ENCODE measurements at regions of chr7 and their contacts with region 1.

Region 1: GRCh38 chr7:96321658-96322372 is at the start of gene SLC25A13:
- DNase-seq: peak; percentile 92 to 93
- ATAC-seq: peak; percentile 98 to 100 (median 98)
- H3K4me3 ChIP-seq: peak within 1 kb of the TSS; percentile 67 to 99 (median 93)
- H3K27ac ChIP-seq: peak within 1 kb of the TSS; percentile 93 to 99 (median 97)
- H3K4me1 ChIP-seq: peaks cover 5 to 41% (median 32%) of the 10 kb centered on the region in 9 donors
- H3K27me3 ChIP-seq: no peaks in the 10 kb centered on the region
- CTCF ChIP-seq: no peak
- total RNA-seq, gene SLC25A13: 6.5 to 15.3 (median 10.3) TPM

Region 2: DNA sequence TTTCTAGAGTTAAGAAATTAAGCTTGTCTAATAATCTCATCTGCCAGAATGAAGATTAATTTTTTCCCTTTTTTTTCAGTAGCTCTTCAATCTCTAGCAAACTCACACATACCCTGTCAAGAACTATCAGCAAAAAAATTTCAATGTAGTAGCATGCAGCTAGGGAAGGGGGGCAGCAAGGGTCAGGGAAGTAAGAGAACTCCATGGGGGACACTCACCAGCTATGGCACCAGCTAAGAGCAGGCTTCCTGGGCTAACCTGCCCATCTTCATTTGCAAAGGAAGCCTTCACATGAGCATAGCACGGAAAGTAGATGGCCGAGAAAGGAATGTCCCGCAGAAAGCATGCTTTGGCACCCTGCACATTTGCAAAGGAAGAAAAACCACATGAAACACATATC is 190.3 kb before region 1 on chr7:
- intact Hi-C with region 1: no loop called
- DNase-seq: no peak
- ATAC-seq: no peak
- H3K4me3 ChIP-seq: no peak overlapping the region
- H3K27ac ChIP-seq: no peak overlapping the region
- H3K4me1 ChIP-seq: no peaks in the 10 kb centered on the region
- H3K27me3 ChIP-seq: no peaks in the 10 kb centered on the region
- CTCF ChIP-seq: peak in 1 of 9 donors; percentile 11

Region 3: DNA sequence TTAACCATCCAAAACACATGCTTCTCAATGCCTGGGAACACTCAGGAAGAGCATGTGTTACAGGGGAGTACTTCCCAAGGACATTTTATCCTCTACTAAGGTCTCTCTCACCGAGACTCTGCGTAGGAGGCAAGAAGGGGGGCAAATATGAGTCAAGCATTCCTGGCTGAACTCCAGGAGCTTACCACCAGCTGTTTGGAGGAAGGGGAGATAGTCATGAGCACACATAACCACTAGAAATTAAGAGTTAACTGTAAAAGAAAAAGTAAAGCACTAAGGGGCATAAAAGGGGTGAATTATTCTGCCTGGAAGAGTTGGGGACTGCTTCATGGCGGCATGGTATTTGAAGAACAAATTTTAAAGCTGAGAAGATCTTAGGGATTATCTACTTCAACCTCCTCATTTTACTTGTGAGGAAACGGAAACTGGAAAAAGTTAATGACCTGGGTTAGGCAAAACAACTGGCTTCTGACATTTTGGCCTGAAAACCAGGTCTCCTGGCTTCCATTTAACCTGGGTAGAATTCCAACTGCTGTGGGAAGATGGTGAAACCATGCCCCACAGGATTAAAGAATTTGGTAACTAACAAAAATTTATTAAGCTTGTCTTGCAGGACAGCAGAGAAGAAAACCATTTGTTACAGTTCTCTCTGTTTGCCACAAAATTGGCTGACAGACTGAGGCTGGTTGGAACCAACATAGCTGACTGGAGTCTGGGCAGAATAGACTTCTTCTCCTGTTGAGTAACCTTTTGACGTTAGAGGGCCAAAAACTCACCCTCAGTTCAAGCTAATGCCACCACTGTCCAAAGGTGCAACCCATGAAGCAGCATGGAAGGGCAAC is 85.4 kb before region 1 on chr7:
- intact Hi-C with region 1: loop called in 2 of 10 experiments (anchors 5 to 10 kb)
- DNase-seq: peak in 1 of 2 donors; percentile 63
- ATAC-seq: peak; percentile 77 to 94 (median 88)
- H3K4me3 ChIP-seq: no peak overlapping the region
- H3K27ac ChIP-seq: peak overlapping the region; percentile 16 to 77 (median 39)
- H3K4me1 ChIP-seq: peaks cover 0 to 51% (median 36%) of the 10 kb centered on the region in 9 donors
- H3K27me3 ChIP-seq: no peaks in the 10 kb centered on the region
- CTCF ChIP-seq: no peak

Region 4: DNA sequence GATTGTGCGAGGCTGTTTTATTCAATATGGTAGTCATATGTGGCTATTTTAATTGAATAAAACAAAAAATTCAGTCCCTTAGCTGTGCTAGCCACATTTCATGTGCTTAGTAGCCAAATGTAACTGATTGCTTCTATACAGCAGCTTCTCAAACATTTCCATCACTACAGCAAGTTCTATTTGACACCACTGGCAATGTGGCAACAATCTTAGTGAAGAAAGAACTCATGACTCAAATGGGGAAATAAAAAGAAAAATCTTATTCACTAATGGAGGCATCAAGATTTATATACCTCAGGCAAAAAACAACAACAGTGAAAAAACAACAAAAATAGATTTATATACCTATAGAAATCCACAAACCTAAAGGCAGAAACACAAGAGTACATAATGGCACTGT is 369.9 kb after region 1 on chr7:
- intact Hi-C with region 1: loop called in 1 of 10 experiments (anchors 10 kb)
- DNase-seq: no peak
- ATAC-seq: no peak
- H3K4me3 ChIP-seq: no peak overlapping the region
- H3K27ac ChIP-seq: no peak overlapping the region
- H3K4me1 ChIP-seq: peaks cover 0 to 72% (median 33%) of the 10 kb centered on the region in 9 donors
- H3K27me3 ChIP-seq: no peaks in the 10 kb centered on the region
- CTCF ChIP-seq: no peak

Region 5: DNA sequence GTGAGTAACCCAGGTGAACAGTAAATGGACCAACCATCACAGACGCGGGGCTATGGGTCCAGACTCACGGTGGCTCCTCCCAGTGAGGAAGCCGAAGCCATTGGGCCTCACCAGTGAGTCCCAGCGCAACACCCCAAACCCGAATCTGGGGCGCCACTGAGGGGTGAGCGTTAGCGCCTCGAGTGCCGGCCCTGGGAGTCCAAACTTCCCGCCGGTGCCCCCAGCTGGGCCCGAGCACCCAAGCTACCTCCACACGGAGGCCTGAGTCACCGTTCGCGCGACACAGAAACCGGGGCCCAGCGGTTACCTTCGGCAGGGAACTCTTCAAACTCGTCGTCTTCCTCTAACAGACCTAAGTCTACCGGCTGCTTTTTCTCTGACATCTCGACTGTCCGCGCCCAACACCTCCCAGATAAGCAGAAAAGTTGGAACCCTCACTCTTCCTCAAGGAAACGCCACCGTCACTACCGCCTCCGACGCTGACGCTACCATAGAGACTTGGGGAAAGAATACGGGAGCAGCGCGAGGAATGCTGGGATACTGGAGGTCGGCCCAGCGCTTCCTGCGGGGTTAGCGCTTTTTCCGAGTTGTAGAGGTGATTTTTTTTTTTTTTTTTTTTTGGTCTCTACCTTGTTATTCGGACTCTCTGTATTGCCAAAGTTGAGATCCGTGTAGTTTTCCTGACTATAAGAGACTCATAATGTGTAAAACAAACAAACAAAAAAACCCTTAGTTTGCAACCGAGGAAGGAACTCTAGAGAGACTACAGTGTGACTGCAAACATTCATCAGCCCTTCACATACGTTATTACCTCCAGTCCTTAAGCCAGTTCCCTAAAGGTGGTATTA is 387.8 kb after region 1 on chr7 and contains the start of gene SEM1:
- intact Hi-C with region 1: loop called in 2 of 10 experiments (anchors 5 kb)
- DNase-seq: peak; percentile 84 to 91
- ATAC-seq: peak; percentile 99 to 100 (median 100)
- H3K4me3 ChIP-seq: peak within 1 kb of the TSS; percentile 66 to 96 (median 84)
- H3K27ac ChIP-seq: peak within 1 kb of the TSS; percentile 70 to 94 (median 88)
- H3K4me1 ChIP-seq: peaks cover 5 to 34% (median 26%) of the 10 kb centered on the region in 9 donors
- H3K27me3 ChIP-seq: peaks cover 0 to under 1% (median 0%) of the 10 kb centered on the region in 7 donors
- CTCF ChIP-seq: no peak
- total RNA-seq, gene SEM1: 41.4 to 61.4 (median 51.8) TPM

Measured in heart right ventricle (tissue), 16 donors.